ENCODE measurements at regions of chr7 and their contacts with region 1.

Region 1: DNA sequence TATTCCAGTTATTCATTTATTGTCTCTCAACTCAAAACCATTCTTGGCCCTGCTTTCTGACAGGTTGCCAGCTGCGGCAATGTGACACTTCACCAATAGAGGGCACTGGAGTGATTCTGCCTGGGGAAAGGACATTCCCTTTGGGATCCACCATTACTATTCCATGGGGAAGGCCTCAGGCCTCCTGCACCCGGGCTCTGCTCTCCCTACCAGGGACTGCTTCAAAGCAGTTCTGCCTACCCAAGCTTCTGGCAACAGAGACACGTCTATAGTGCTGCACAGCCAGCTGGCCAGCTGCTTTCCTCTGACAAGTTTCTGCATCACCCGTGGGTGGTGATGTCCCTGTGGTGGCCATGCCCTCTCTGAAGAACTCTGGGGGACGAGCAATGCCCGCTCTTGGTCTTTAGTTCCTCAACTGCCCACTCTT is 163.8 kb downstream of the ELMO1 start:
- DNase-seq: peak; percentile 38 to 68 (median 53)
- ATAC-seq: peak in 3 of 4 donors; percentile 18 to 60 (median 49)
- H3K4me3 ChIP-seq: no peak overlapping the region
- H3K27ac ChIP-seq: peak overlapping the region in 2 of 12 donors; percentile 21 to 47
- H3K4me1 ChIP-seq: peaks cover 7 to 72% (median 39%) of the 10 kb centered on the region in 12 donors
- H3K27me3 ChIP-seq: no peaks in the 10 kb centered on the region
- CTCF ChIP-seq: peak; percentile 62 to 87 (median 72)
- POLR2A ChIP-seq: no peak

Region 2: GRCh38 chr7:37208528-37208927 is 76.3 kb before region 1 on chr7:
- intact Hi-C with region 1: loop called in 1 of 10 experiments (anchors 10 kb)
- DNase-seq: peak in 4 of 5 donors; percentile 73 to 76 (median 74)
- ATAC-seq: peak; percentile 85 to 93 (median 90)
- H3K4me3 ChIP-seq: no peak overlapping the region
- H3K27ac ChIP-seq: peak overlapping the region; percentile 6 to 75 (median 56)
- H3K4me1 ChIP-seq: peaks cover 0 to 33% (median 22%) of the 10 kb centered on the region in 12 donors
- H3K27me3 ChIP-seq: no peaks in the 10 kb centered on the region
- CTCF ChIP-seq: peak; percentile 51 to 82 (median 59)
- POLR2A ChIP-seq: no peak

Region 3: DNA sequence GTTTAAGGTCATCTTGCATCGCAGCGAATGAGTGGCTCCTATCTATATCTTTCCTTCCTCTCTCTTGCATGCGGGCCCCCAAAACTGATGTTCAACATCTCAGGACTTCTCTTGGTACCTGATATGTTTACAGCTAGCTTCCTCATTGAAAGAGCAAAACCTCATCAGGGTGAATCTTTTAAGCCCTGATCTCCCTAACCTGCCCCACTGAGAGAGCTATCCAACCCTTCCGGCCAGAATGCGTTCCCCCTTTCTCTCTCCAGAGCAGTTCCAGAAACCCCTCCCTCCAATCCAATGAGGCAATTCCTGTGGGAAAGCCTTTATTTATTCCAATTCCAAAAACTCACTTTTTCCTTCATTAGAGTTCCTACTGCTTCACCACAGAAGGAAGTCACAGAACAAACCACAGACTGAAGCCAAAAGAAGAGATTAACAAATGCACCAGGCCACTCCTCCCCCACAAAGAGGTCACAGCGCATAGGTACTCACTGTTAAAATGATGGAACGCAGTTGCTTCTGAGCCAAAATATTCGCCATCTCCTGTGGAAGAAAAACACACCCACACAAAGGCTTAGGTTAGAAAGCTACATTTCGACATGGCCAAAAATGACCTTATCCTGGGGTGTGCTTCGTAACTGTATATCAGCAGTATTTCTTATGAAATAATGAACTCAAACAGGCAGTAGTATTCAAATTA is 68.5 kb before region 1 on chr7:
- intact Hi-C with region 1: loop called in 2 of 10 experiments (anchors 5 to 10 kb)
- DNase-seq: peak in 1 of 5 donors; percentile 29
- ATAC-seq: peak in 3 of 4 donors; percentile 69 to 82 (median 77)
- H3K4me3 ChIP-seq: no peak overlapping the region
- H3K27ac ChIP-seq: peak overlapping the region in 5 of 12 donors; percentile 4 to 40 (median 37)
- H3K4me1 ChIP-seq: peaks cover 0 to 55% (median 30%) of the 10 kb centered on the region in 12 donors
- H3K27me3 ChIP-seq: no peaks in the 10 kb centered on the region
- CTCF ChIP-seq: no peak
- POLR2A ChIP-seq: no peak

Region 4: DNA sequence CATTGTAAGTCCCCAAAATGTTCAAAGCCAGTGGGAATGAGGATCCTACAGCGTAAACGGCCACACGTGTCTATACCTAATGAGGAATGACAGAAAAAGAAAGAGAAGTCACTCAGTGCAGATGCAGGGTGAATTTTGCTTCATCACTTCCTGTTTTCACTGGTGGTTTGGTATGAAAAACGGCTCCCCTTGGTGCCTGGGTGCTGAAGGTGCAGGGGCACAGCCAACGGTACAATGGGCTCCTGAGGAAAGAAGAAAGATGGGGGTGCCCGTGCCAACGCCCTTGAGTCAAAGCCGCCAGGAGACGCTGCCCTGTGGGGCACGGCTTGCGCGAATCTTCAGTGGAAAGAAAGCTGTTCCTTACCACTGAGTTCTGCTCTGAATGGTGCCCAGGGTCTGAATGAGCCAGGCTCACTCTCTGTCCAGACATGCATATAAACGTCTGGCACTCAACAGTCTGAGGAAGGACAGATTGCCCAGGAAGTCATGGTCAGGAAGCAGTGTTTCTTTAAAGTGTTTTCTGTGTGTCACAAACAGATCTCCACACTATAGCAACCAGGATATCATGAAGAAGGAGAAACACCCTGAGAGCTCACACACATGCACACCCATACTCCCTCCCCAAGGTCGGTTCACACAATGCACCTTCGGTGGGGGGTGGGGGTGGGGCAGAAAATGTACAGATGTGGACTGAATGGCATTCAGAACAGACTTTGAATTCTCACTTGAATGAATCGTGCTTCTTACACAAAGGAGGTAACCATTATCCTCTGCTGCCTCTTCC is 58.1 kb after region 1 on chr7:
- intact Hi-C with region 1: loop called in 1 of 10 experiments (anchors 5 kb)
- DNase-seq: peak in 1 of 5 donors; percentile 48
- ATAC-seq: peak in 3 of 4 donors; percentile 45 to 70 (median 63)
- H3K4me3 ChIP-seq: peak overlapping the region in 4 of 12 donors; percentile 1 to 55 (median 28)
- H3K27ac ChIP-seq: peak overlapping the region in 4 of 12 donors; percentile 11 to 87 (median 36)
- H3K4me1 ChIP-seq: peaks cover 0 to 47% (median 16%) of the 10 kb centered on the region in 12 donors
- H3K27me3 ChIP-seq: no peaks in the 10 kb centered on the region
- CTCF ChIP-seq: peak in 1 of 12 donors; percentile 7
- POLR2A ChIP-seq: no peak

Region 5: DNA sequence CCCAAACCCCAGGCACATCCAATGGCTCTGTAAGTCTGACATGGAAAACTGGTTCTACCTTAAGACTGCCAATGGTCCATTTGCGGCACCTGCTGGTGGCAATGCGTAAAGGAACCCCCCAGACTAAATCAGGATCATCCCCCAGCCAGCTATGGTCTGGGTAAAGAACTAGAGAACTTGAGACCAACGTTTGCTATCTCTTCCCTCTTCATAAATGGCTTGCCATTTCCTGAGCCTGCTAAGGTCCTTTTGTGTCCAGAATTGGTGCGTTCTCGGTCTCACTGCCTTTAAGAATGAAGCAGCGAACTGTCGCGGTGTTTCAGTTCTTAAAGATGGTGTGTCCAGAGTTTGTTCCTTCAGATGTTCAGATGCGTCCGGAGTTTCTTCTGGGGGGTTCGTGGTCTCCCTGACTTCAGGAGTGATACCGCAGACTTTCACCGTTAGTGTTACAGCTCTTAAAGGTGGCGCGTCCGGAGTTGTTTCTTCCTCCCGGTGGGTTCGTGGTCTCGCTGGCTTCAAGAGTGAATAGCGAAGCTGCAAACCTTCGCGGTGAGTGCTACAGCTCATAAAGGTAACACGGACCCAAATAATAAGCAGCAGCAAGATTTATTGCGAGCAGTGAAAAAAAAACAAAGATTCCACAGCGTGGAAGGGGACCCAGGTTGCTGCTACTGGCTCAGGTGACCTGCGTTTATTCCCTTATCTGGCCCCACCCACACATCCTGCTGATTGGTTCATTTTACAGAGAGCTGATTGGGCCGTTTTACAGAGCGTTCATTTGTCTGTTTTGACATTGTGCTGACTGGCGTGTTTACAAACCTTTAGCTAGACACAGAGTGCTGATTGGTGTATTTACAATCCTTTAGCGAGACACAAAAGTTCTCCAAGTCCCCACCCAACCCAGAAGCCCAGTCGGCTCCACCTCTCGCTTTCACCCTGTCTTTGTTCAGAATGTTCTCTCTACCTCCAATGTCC is 68.4 kb after region 1 on chr7:
- intact Hi-C with region 1: loop called in 1 of 10 experiments (anchors 5 kb)
- DNase-seq: peak in 3 of 5 donors; percentile 21 to 42 (median 34)
- ATAC-seq: peak in 2 of 4 donors; percentile 4 to 5
- H3K4me3 ChIP-seq: peak overlapping the region in 4 of 12 donors; percentile 1 to 53 (median 13)
- H3K27ac ChIP-seq: peak overlapping the region in 11 of 12 donors; percentile 45 to 87 (median 77)
- H3K4me1 ChIP-seq: peaks cover 6 to 81% (median 44%) of the 10 kb centered on the region in 12 donors
- H3K27me3 ChIP-seq: no peaks in the 10 kb centered on the region
- CTCF ChIP-seq: peak in 4 of 12 donors; percentile 21 to 42 (median 22)
- POLR2A ChIP-seq: no peak

Region 6: GRCh38 chr7:37395618-37396259 is 110.9 kb after region 1 on chr7:
- intact Hi-C with region 1: no loop called
- DNase-seq: no peak
- ATAC-seq: no peak
- H3K4me3 ChIP-seq: no peak overlapping the region
- H3K27ac ChIP-seq: no peak overlapping the region
- H3K4me1 ChIP-seq: peaks cover 0 to 48% (median 13%) of the 10 kb centered on the region in 12 donors
- H3K27me3 ChIP-seq: no peaks in the 10 kb centered on the region
- CTCF ChIP-seq: no peak
- POLR2A ChIP-seq: no peak

Region 7: GRCh38 chr7:37495574-37496184 is 210.9 kb after region 1 on chr7:
- intact Hi-C with region 1: loop called in 8 of 10 experiments (anchors 2 to 10 kb)
- DNase-seq: no peak
- ATAC-seq: no peak
- H3K4me3 ChIP-seq: no peak overlapping the region
- H3K27ac ChIP-seq: no peak overlapping the region
- H3K4me1 ChIP-seq: peaks cover 0 to 3% (median 0%) of the 10 kb centered on the region in 12 donors
- H3K27me3 ChIP-seq: no peaks in the 10 kb centered on the region
- CTCF ChIP-seq: peak; percentile 61 to 86 (median 80)
- POLR2A ChIP-seq: no peak

Region 8: GRCh38 chr7:37504801-37505200 is 220.0 kb after region 1 on chr7:
- intact Hi-C with region 1: loop called in 1 of 10 experiments (anchors 5 kb)
- DNase-seq: no peak
- ATAC-seq: peak in 1 of 4 donors; percentile 48
- H3K4me3 ChIP-seq: no peak overlapping the region
- H3K27ac ChIP-seq: peak overlapping the region in 4 of 12 donors; percentile 11 to 51 (median 31)
- H3K4me1 ChIP-seq: peaks cover 0 to 13% (median 0%) of the 10 kb centered on the region in 12 donors
- H3K27me3 ChIP-seq: peaks cover 0 to 4% (median 0%) of the 10 kb centered on the region in 9 donors
- CTCF ChIP-seq: no peak
- POLR2A ChIP-seq: no peak

Measured in heart left ventricle (tissue), 16 donors.